Head of caudate nucleus (tissue), 42 donors: ENCODE measurements at regions of chrX and their contacts with region 1.

Region 1: GRCh38 chrX:108537005-108537404 is 97.4 kb downstream of the COL4A5 start:
- DNase-seq: peak in 15 of 42 donors; percentile 4 to 63 (median 22)

Region 2: DNA sequence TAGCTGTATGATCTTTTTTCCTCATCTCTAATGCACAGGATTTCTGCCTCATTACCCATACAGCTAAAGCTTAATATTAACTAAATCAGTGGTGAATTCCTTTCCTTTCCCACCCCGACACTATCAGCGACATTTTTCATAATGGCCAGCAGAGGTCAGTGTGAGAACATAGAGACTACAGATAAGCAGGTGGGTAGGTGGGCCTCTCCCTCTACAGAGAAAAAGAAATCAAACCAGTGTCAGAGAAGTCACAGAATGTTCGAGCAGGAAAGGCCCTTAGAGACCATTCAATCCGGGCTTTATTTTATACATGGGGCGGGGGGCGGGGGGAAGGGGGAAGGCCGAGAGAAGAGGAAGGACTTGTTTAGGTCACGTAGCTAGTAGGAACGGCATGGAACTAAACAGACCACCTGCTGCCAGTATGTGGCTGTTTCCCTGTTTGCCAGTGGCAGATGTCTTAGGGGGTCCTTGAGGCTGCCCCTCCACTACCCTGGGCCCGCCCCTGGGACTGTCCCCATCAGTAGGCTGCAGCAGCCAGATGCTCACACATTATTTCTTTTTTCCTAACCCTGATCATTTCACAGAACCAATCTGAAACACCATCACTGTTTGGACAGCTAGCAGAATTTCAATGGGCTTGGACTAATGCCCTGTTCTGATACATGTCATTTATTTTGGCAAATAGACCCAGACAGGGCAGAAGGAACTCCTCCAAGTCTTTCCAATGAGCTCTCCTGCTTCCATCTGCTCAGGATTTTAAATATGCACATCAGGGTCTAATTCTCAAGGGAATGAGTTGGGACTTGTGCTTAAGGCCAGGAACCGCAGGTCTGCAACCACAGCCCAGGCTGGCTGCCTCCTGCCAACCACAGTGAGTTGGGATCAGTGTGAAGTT is 312.0 kb before region 1 on chrX:
- intact Hi-C with region 1: loop called (anchors 5 kb)
- DNase-seq: peak in 19 of 42 donors; percentile 1 to 49 (median 18)